Spleen (tissue), 13 donors: ENCODE measurements at regions of chr2 and their contacts with region 1.

Region 1: DNA sequence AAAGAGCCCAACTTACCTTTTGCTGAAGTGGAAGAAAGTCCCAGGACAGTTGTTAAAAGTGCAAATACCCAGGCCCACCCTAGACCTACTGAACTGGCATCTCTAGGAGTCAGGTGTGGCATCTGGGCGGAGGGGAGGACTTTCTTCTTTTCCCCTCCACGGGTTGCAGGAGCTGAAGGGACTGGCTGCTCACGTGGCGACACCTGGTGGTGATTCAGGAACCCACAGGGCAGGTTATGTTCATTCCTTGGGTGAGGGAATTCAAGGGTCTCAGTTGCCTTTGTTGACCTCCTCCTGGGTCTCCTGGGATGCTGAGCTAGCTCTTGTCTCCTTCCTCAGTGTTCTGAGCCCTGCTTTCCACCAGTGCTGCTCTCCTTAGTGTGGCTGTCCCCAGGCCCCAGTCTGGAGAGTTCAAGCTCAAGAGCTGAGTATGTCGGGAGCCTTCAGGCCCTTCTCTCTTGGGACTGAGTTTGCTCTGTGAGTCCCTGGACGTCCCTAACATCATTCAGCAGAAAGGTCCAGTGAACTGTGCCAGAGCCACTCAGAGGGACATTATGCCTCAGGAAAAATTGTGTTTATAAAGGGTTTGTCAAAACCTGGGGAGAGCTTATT is 56.9 kb downstream of the DYSF start:
- DNase-seq: peak; percentile 87
- H3K4me3 ChIP-seq: no peak overlapping the region
- H3K27ac ChIP-seq: no peak overlapping the region
- H3K4me1 ChIP-seq: peaks cover 0 to 39% (median 13%) of the 10 kb centered on the region in 6 donors
- H3K27me3 ChIP-seq: no peaks in the 10 kb centered on the region
- CTCF ChIP-seq: peak; percentile 74 to 91 (median 87)
- POLR2A ChIP-seq: no peak

Region 2: GRCh38 chr2:71157124-71157793 is 353.0 kb before region 1 on chr2:
- intact Hi-C with region 1: loop called (anchors 5 kb)
- DNase-seq: peak; percentile 81
- H3K4me3 ChIP-seq: peak overlapping the region in 3 of 8 donors; percentile 9 to 33 (median 25)
- H3K27ac ChIP-seq: no peak overlapping the region
- H3K4me1 ChIP-seq: peaks cover 0 to 13% (median 6%) of the 10 kb centered on the region in 6 donors
- H3K27me3 ChIP-seq: peaks cover 0 to 12% (median 0%) of the 10 kb centered on the region in 7 donors
- CTCF ChIP-seq: peak; percentile 8 to 76 (median 51)
- POLR2A ChIP-seq: no peak

Region 3: DNA sequence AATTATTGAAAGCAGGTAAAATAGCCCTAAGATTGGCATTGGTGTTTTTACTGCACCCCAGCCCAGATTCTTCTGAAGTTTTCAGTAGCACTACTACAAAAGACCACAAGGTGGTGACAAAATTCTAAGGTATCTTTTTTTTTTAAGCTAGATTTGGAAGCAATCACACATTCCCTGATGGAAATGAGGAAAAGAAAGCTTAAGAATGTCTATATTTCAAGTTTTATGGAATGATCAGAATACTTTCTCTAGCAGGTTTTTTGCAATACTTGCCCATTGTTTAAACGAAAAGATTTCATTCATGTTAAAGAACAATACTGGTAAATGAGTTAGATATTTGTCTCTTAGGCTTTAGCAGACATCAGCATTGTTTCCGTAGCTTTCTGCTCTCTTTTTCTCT is 210.8 kb before region 1 on chr2:
- intact Hi-C with region 1: loop called (anchors 5 kb)
- DNase-seq: no peak
- H3K4me3 ChIP-seq: no peak overlapping the region
- H3K27ac ChIP-seq: no peak overlapping the region
- H3K4me1 ChIP-seq: no peaks in the 10 kb centered on the region
- H3K27me3 ChIP-seq: no peaks in the 10 kb centered on the region
- CTCF ChIP-seq: peak; percentile 52 to 84 (median 71)
- POLR2A ChIP-seq: no peak

Region 4: DNA sequence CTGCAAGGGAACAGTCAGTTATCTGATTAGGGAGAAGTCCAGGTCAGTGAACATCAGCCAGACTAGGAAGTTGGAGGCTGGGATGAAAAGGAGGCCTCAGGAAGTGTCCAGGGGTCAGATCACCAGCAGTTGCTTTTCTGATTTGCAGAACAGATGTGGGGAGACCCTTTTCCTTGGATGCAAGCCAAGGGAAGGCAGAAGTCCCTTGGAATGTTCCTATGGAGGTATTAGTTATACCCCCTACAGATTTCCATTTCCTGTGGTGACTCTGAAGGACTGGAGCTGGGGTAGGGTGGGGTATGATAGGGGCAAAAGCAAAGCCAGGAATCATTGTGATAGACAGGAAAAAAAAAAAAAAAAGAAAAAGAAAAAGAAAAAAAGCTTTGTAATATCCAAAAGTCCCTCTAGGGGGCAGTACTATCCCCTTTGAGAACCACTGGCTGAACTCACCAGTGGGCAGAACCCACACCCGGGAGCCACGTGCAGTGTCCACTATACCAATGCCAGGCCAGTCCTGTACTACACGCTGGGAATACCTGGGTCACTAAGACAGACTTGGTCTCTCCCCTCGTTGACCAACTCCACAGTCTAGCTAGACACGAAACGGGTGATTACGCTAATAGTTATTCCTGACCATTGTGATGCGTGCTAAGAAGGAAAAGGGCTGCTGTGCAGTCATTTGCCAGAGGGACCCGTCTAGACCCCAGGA is 49.6 kb before region 1 on chr2:
- intact Hi-C with region 1: loop called (anchors 2 kb)
- DNase-seq: no peak
- H3K4me3 ChIP-seq: no peak overlapping the region
- H3K27ac ChIP-seq: peak overlapping the region in 2 of 8 donors; percentile 22 to 25
- H3K4me1 ChIP-seq: peaks cover 3 to 87% (median 33%) of the 10 kb centered on the region in 6 donors
- H3K27me3 ChIP-seq: peaks cover 0 to 37% (median 0%) of the 10 kb centered on the region in 7 donors
- CTCF ChIP-seq: peak in 10 of 11 experiments; percentile 16 to 77 (median 46)
- POLR2A ChIP-seq: no peak